ENCODE measurements at regions of chr10 and their contacts with region 1.

Region 1: DNA sequence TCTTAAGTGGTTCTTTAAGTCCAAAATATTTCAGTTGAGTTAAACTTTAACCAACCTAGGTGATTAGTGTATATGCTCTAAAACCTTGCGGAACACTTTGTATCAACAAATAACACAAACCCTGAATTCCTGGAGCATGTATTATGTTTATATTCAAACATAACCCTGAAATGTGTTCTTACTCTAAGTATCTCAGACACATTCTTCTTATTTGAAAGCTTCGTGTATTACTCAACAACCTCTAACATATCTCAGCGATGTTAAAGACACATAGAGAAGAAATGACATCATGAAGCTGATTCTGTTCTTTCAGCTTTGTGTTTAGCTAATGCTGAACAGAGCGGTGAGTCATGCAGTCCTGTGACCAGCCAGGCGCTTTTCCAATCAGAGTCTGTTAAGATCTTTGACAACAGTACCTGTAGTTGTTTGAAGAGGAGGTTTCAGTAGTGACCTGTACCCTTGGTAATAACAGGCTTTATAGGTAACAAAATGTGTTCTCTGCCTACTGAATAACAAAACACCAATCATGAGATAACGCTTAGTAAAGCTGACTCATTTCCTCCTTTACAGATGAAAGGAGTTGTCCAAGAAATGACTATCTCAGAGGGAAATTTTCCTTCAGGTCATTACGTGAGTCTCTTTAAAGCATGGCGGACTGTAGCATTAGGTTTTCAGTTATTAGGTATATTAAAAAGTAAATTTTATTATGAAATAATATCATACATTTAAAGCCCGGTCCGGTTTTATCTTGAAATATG is 67.3 kb upstream of the KLF6 start:
- DNase-seq: peak; percentile 85
- H3K4me3 Mint-ChIP-seq: no peak overlapping the region
- H3K27ac Mint-ChIP-seq: peak overlapping the region; percentile 88
- H3K4me1 Mint-ChIP-seq: peaks cover 49% of the 10 kb centered on the region
- H3K27me3 Mint-ChIP-seq: no peaks in the 10 kb centered on the region

Region 2: DNA sequence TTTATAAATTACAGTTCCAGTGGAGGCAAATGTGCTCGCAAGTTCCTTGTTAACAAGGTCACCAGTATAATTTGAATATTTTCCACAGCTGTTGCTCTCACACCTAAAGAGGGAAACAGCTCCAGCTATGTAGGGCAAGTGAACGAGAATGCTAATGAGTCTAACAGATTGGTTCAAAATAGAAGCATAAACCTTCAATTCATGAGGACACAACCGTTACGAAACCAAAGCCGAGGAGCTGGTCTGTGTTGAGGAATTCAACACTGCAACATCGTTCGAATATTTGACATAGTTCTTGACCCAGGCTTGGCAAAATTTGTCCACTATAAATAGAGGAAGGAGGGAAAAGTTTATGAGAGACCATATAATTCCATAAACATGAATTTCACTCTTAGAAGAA is 228.6 kb before region 1 on chr10:
- CTCF ChIA-PET with region 1: no interaction called
- intact Hi-C with region 1: loop called (anchors 5 kb)
- DNase-seq: no peak
- H3K4me3 Mint-ChIP-seq: no peak overlapping the region
- H3K27ac Mint-ChIP-seq: no peak overlapping the region
- H3K4me1 Mint-ChIP-seq: peaks cover 21% of the 10 kb centered on the region
- H3K27me3 Mint-ChIP-seq: peaks cover 2% of the 10 kb centered on the region

Region 3: DNA sequence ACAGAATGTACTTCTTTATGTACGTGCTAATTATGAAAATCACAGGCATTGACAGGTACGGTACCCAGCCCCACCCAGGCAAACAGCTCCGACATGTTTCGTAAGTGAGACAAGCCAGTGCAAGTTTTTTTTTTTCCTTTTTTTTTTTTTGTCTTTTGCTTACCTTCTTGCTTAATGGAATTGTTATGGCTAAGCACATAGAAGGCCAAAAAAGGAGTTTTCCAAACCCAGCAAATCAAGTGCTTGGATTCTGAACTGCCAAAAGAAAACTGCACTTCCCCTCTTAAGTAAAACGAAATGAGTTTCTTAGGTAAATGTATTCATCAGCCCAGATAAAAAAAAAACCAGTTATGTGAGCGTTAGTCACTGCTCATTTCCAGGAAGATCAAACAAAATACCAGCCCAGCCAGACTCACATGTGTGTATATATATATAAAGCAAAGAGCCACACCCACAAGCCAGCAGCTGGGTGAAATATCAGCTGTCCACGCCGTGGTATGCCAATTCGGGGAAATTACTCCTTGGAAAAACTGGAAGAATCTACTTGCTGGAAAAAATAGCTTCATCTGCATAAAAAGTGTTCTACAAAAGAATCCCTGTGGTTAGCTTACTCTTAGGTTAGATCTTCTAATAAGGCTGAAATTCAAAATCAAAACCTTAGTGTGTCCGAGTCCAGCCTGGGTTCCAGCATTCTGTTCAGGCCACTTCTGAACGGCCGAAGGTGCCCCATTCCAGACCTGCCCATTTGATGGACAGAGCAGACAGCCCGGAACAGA is 75.3 kb before region 1 on chr10:
- CTCF ChIA-PET with region 1: no interaction called
- intact Hi-C with region 1: loop called (anchors 1 kb)
- DNase-seq: peak; percentile 70
- H3K4me3 Mint-ChIP-seq: peak overlapping the region; percentile 53
- H3K27ac Mint-ChIP-seq: peak overlapping the region; percentile 90
- H3K4me1 Mint-ChIP-seq: peaks cover 65% of the 10 kb centered on the region
- H3K27me3 Mint-ChIP-seq: no peaks in the 10 kb centered on the region

Region 4: GRCh38 chr10:3811291-3811870 is 40.9 kb before region 1 on chr10:
- CTCF ChIA-PET with region 1: interaction called, 6 read pairs
- intact Hi-C with region 1: loop called (anchors 1 kb)
- DNase-seq: peak; percentile 82
- H3K4me3 Mint-ChIP-seq: peak overlapping the region; percentile 52
- H3K27ac Mint-ChIP-seq: peak overlapping the region; percentile 96
- H3K4me1 Mint-ChIP-seq: peaks cover 76% of the 10 kb centered on the region
- H3K27me3 Mint-ChIP-seq: no peaks in the 10 kb centered on the region

Region 5: DNA sequence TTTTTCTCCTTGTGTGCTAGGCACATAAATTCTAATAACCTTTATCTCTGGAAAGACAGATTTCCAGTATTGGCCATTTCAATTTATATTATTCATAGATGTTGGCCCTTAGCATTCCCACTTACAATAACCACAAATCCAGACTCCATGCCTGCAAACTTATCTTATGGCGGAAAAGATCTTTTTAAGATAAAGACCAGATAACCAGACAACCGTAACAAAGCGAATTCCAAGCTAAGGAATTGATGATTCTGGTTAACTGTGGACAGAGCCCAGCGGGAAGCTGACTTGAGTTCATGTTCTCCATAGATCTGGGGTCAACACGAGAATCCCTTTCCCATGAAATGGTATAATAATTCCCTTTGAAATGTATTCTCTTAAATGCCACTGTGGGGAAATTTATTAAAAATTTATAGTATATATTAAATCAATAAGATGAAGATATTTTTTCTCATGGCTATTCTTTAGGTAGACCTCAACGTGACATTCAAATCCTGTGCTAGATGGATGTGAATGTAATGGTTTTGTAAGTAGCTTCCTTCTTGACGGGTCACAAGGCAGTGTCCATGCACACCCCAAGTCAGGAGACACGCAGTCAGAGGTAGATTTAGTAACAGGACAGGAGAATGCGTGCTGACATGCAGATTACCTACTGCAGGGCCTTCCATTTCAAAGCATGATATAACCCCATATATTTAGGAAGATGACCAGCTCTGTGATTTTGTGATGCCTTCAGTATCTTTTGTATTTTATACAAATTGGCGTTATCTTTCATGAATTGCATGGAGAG is 29.6 kb before region 1 on chr10:
- CTCF ChIA-PET with region 1: no interaction called
- intact Hi-C with region 1: no loop called
- DNase-seq: no peak
- H3K4me3 Mint-ChIP-seq: no peak overlapping the region
- H3K27ac Mint-ChIP-seq: no peak overlapping the region
- H3K4me1 Mint-ChIP-seq: peaks cover 4% of the 10 kb centered on the region
- H3K27me3 Mint-ChIP-seq: no peaks in the 10 kb centered on the region

Region 6: DNA sequence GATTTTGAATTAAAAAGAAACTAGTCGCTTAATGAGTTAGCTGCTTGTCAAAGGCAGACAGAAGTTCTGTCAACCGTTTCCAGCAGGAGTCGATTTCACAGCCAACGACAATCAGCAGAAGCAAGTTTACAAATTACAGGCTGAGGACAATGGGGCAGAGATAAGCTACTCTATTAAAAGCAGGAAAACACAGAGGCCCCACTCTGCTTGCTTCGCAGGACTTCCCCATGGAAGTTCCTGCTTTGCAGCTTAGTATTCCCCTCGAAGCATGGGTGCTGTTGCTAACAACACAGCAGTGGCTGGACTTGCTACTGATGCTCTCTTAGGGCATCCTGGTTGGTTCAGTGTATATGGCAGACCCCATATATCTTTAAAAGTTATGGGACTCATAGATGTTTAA is 16.6 kb before region 1 on chr10:
- CTCF ChIA-PET with region 1: no interaction called
- intact Hi-C with region 1: loop called (anchors 1 kb)
- DNase-seq: no peak
- H3K4me3 Mint-ChIP-seq: no peak overlapping the region
- H3K27ac Mint-ChIP-seq: peak overlapping the region; percentile 78
- H3K4me1 Mint-ChIP-seq: peaks cover 36% of the 10 kb centered on the region
- H3K27me3 Mint-ChIP-seq: no peaks in the 10 kb centered on the region

Region 7: GRCh38 chr10:3873728-3874461 is 21.6 kb after region 1 on chr10:
- CTCF ChIA-PET with region 1: no interaction called
- intact Hi-C with region 1: loop called (anchors 1 kb)
- DNase-seq: no peak
- H3K4me3 Mint-ChIP-seq: no peak overlapping the region
- H3K27ac Mint-ChIP-seq: peak overlapping the region; percentile 36
- H3K4me1 Mint-ChIP-seq: peaks cover 52% of the 10 kb centered on the region
- H3K27me3 Mint-ChIP-seq: no peaks in the 10 kb centered on the region

Measured in activated naive CD4-positive, alpha-beta T cell treated with anti-CD3 and anti-CD28 coated beads for 36 hours (primary cell).